ENCODE measurements at regions of chrX and their contacts with region 1.

Region 1: GRCh38 chrX:37825209-37825842 is 22.0 kb downstream of the DYNLT3 start:
- DNase-seq: peak; percentile 26
- H3K4me3 ChIP-seq: no peak overlapping the region
- H3K27ac ChIP-seq: no peak overlapping the region
- H3K4me1 ChIP-seq: no peaks in the 10 kb centered on the region
- H3K27me3 ChIP-seq: peaks cover 2% of the 10 kb centered on the region
- CTCF ChIP-seq: peak; percentile 98

Region 2: DNA sequence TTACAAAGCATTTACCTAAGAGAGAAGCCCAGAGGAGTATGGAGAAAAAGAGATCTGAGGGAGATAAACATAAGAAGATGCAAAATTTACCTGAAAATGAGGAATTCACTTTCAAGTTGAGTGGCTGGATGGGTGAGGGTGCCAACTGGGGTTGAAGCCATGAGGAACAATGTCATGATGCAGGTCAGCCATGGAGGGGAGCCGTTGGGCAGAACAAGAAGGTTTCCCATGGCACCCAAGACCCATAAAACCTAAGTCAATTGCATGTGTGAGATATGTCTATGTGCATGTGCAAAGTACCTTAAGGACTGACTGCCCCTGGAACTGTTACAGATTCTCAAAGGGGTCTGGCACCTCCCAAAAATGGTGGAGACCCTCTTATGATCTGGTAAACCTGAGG is 522.8 kb before region 1 on chrX:
- CTCF ChIA-PET with region 1: no interaction called
- dilution Hi-C with region 1: no loop called
- in situ Hi-C with region 1: no loop called
- intact Hi-C with region 1: loop called (anchors 2 kb)
- DNase-seq: peak; percentile 20
- H3K4me3 ChIP-seq: no peak overlapping the region
- H3K27ac ChIP-seq: no peak overlapping the region
- H3K4me1 ChIP-seq: no peaks in the 10 kb centered on the region
- H3K27me3 ChIP-seq: no peaks in the 10 kb centered on the region
- CTCF ChIP-seq: peak; percentile 46 to 57

Region 3: GRCh38 chrX:37509349-37509748 is 316.0 kb before region 1 on chrX:
- CTCF ChIA-PET with region 1: no interaction called
- dilution Hi-C with region 1: no loop called
- in situ Hi-C with region 1: loop called in 1 of 2 experiments (anchors 10 kb)
- intact Hi-C with region 1: no loop called
- DNase-seq: peak; percentile 6
- H3K4me3 ChIP-seq: no peak overlapping the region
- H3K27ac ChIP-seq: no peak overlapping the region
- H3K4me1 ChIP-seq: no peaks in the 10 kb centered on the region
- H3K27me3 ChIP-seq: peaks cover 2% of the 10 kb centered on the region
- CTCF ChIP-seq: peak; percentile 34 to 47

Region 4: GRCh38 chrX:37745354-37745753 is 80.0 kb before region 1 on chrX:
- CTCF ChIA-PET with region 1: interaction called, 15 read pairs
- dilution Hi-C with region 1: no loop called
- in situ Hi-C with region 1: no loop called
- intact Hi-C with region 1: loop called (anchors 1 kb)
- DNase-seq: peak; percentile 51
- H3K4me3 ChIP-seq: no peak overlapping the region
- H3K27ac ChIP-seq: no peak overlapping the region
- H3K4me1 ChIP-seq: no peaks in the 10 kb centered on the region
- H3K27me3 ChIP-seq: no peaks in the 10 kb centered on the region
- CTCF ChIP-seq: peak; percentile 90 to 94

Region 5: GRCh38 chrX:38726597-38726996 is 901.3 kb after region 1 on chrX:
- CTCF ChIA-PET with region 1: no interaction called
- dilution Hi-C with region 1: no loop called
- in situ Hi-C with region 1: no loop called
- intact Hi-C with region 1: no loop called
- DNase-seq: no peak
- H3K4me3 ChIP-seq: no peak overlapping the region
- H3K27ac ChIP-seq: no peak overlapping the region
- H3K4me1 ChIP-seq: no peaks in the 10 kb centered on the region
- H3K27me3 ChIP-seq: no peaks in the 10 kb centered on the region
- CTCF ChIP-seq: no peak